Activated B cell treated with CpG ODN at 0.5 μM for 24 hours (primary cell): ENCODE measurements at regions of chr2 and their contacts with region 1.

Region 1: GRCh38 chr2:119759451-119760236 is at the start of gene PTPN4:
- DNase-seq: peak; percentile 87
- ATAC-seq: peak; percentile 93
- H3K4me3 Mint-ChIP-seq: peak within 1 kb of the TSS; percentile 95
- H3K27ac Mint-ChIP-seq: peak within 1 kb of the TSS; percentile 89
- H3K4me1 Mint-ChIP-seq: peaks cover 41% of the 10 kb centered on the region
- H3K27me3 Mint-ChIP-seq: no peaks in the 10 kb centered on the region
- CTCF ChIP-seq: no peak
- total RNA-seq, gene PTPN4: 28.8 and 41.2 TPM in 2 replicates

Region 2: GRCh38 chr2:117814417-117815264 is 1945.0 kb before region 1 on chr2 and contains the start of gene DDX18:
- CTCF ChIA-PET with region 1: no interaction called
- POLR2A ChIA-PET with region 1: no interaction called
- intact Hi-C with region 1: loop called (anchors 5 kb)
- DNase-seq: peak; percentile 92
- ATAC-seq: peak; percentile 88
- H3K4me3 Mint-ChIP-seq: peak within 1 kb of the TSS; percentile 97
- H3K27ac Mint-ChIP-seq: peak within 1 kb of the TSS; percentile 99
- H3K4me1 Mint-ChIP-seq: peaks cover 51% of the 10 kb centered on the region
- H3K27me3 Mint-ChIP-seq: no peaks in the 10 kb centered on the region
- CTCF ChIP-seq: peak; percentile 82
- total RNA-seq, gene DDX18: 98.9 and 109 TPM in 2 replicates

Region 3: GRCh38 chr2:119647440-119648169 is 112.0 kb before region 1 on chr2:
- CTCF ChIA-PET with region 1: no interaction called
- POLR2A ChIA-PET with region 1: no interaction called
- intact Hi-C with region 1: loop called (anchors 1 kb)
- DNase-seq: no peak
- ATAC-seq: peak; percentile 96
- H3K4me3 Mint-ChIP-seq: peak overlapping the region; percentile 33
- H3K27ac Mint-ChIP-seq: peak overlapping the region; percentile 19
- H3K4me1 Mint-ChIP-seq: peaks cover 22% of the 10 kb centered on the region
- H3K27me3 Mint-ChIP-seq: peaks cover 1% of the 10 kb centered on the region
- CTCF ChIP-seq: no peak

Region 4: DNA sequence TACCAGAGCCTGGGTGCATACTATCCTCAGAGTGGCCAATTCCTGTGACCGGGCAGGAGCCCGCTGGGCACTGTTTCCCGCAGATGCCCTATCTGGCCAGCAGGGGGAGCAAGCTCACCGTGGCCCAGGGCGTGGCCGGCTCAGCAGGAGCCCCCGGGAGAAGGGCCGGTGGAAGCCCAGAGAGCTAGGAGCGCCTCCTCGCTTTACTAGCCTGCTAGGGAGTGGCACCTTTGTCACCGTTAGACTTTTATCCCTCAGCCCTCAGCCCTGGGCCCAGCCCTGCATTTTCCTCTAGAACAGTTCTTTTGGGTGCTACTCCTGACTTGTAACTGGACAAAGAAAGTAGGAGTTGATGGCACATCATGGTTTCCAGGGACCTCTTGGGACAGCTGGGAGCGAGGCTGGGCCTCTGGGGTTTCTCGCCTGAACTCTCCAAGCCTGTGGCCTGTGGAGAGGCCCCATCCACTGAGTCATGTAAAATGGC is 56.7 kb before region 1 on chr2:
- CTCF ChIA-PET with region 1: interaction called, 4 read pairs
- POLR2A ChIA-PET with region 1: interaction called, 4 read pairs
- intact Hi-C with region 1: loop called (anchors 2 kb)
- DNase-seq: peak; percentile 52
- ATAC-seq: peak; percentile 97
- H3K4me3 Mint-ChIP-seq: no peak overlapping the region
- H3K27ac Mint-ChIP-seq: no peak overlapping the region
- H3K4me1 Mint-ChIP-seq: peaks cover 2% of the 10 kb centered on the region
- H3K27me3 Mint-ChIP-seq: peaks cover 6% of the 10 kb centered on the region
- CTCF ChIP-seq: peak; percentile 69

Region 5: DNA sequence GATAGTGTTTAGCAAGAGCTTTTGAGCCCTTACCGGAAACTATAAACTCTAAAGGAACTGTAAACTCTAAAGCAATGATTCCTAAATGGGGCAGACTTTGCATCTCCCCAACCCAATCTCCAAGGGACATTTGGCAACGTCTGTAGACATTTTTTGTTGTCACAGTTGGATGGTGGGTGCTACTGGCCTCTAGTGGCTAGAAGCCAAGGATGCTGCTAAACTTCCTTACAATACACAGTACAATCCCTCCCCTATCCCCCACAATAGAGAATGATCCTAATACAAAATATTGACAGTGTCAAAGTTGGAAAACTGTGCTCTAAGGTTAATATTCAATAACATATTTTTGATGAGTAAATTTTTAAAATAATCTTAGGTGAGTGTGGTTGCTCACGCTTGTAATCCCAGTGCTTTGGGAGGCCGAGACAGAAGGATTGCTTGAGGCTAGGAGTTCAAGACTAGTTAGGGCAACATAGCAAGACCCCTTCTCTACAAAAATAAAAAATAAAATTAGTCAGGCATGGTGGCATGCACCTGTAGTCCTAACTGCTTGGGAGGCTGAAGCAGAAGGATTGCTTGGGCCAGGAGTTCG is 66.8 kb after region 1 on chr2:
- CTCF ChIA-PET with region 1: interaction called, 17 read pairs
- POLR2A ChIA-PET with region 1: interaction called, 13 read pairs
- intact Hi-C with region 1: no loop called
- DNase-seq: no peak
- ATAC-seq: no peak
- H3K4me3 Mint-ChIP-seq: no peak overlapping the region
- H3K27ac Mint-ChIP-seq: no peak overlapping the region
- H3K4me1 Mint-ChIP-seq: peaks cover 8% of the 10 kb centered on the region
- H3K27me3 Mint-ChIP-seq: no peaks in the 10 kb centered on the region
- CTCF ChIP-seq: no peak

Region 6: GRCh38 chr2:120012771-120013596 is 253.3 kb after region 1 on chr2 and contains the start of gene EPB41L5:
- CTCF ChIA-PET with region 1: no interaction called
- POLR2A ChIA-PET with region 1: interaction called, 19 read pairs
- intact Hi-C with region 1: loop called (anchors 1 kb)
- DNase-seq: peak; percentile 77
- ATAC-seq: peak; percentile 87
- H3K4me3 Mint-ChIP-seq: peak within 1 kb of the TSS; percentile 87
- H3K27ac Mint-ChIP-seq: peak within 1 kb of the TSS; percentile 79
- H3K4me1 Mint-ChIP-seq: peaks cover 32% of the 10 kb centered on the region
- H3K27me3 Mint-ChIP-seq: no peaks in the 10 kb centered on the region
- CTCF ChIP-seq: no peak
- total RNA-seq, gene EPB41L5: 20.9 and 29.4 TPM in 2 replicates

Region 7: GRCh38 chr2:120252225-120253021 is 492.8 kb after region 1 on chr2 and contains the start of gene RALB:
- CTCF ChIA-PET with region 1: no interaction called
- POLR2A ChIA-PET with region 1: interaction called, 9 read pairs
- intact Hi-C with region 1: loop called (anchors 2 kb)
- DNase-seq: peak; percentile 98
- ATAC-seq: peak; percentile 94
- H3K4me3 Mint-ChIP-seq: peak within 1 kb of the TSS; percentile 99
- H3K27ac Mint-ChIP-seq: peak within 1 kb of the TSS; percentile 94
- H3K4me1 Mint-ChIP-seq: peaks cover 63% of the 10 kb centered on the region
- H3K27me3 Mint-ChIP-seq: peaks cover 3% of the 10 kb centered on the region
- CTCF ChIP-seq: no peak
- total RNA-seq, gene RALB: 29.9 and 33.4 TPM in 2 replicates

Region 8: GRCh38 chr2:120949027-120949956 is 1189.6 kb after region 1 on chr2:
- CTCF ChIA-PET with region 1: no interaction called
- POLR2A ChIA-PET with region 1: no interaction called
- intact Hi-C with region 1: no loop called
- DNase-seq: no peak
- ATAC-seq: no peak
- H3K4me3 Mint-ChIP-seq: no peak overlapping the region
- H3K27ac Mint-ChIP-seq: no peak overlapping the region
- H3K4me1 Mint-ChIP-seq: no peaks in the 10 kb centered on the region
- H3K27me3 Mint-ChIP-seq: no peaks in the 10 kb centered on the region
- CTCF ChIP-seq: no peak